Tibial artery (tissue), 4 donors: ENCODE measurements at regions of chr2 and their contacts with region 1.

Region 1: DNA sequence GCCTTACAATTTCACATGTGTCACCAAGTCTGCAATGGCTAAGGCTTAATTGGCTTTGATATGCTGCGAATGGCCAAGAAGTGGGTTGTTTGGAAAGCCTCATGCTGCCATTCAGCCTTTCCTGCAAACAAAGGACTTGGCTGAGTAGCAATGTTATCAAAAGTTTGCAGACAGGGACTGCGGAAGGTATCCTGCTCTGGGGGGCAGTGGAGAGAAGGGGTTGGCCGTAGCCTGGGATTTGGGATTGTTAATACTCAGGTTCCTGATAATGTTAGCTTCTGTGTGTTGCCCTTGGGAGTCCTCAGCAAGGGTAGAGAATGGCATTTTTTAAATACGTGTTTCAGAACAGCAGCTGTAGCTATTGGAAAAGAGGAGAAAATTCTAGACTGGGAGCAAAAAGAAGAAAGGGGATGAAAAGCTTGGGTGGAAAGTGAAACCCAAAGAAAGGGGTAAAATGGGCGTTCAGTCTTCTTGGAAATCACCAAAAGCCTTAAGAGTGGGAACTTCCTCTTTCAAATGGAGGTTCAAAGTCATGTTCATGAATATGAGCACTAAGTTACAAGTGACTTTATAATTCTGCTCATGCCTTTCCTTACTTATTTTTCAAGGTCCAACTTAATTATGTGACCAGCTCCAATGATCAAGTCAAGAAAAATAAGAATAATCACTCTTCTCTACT is 325.1 kb downstream of the RNF144A start:
- DNase-seq: no peak
- H3K4me3 ChIP-seq: no peak overlapping the region
- H3K27ac ChIP-seq: no peak overlapping the region
- H3K4me1 ChIP-seq: no peaks in the 10 kb centered on the region
- H3K27me3 ChIP-seq: no peaks in the 10 kb centered on the region
- CTCF ChIP-seq: no peak

Region 2: GRCh38 chr2:7225848-7226247 is 16.5 kb before region 1 on chr2:
- intact Hi-C with region 1: loop called (anchors 1 kb)
- DNase-seq: no peak
- H3K4me3 ChIP-seq: no peak overlapping the region
- H3K27ac ChIP-seq: no peak overlapping the region
- H3K4me1 ChIP-seq: no peaks in the 10 kb centered on the region
- H3K27me3 ChIP-seq: no peaks in the 10 kb centered on the region
- CTCF ChIP-seq: no peak